Activated CD4-positive, alpha-beta T cell treated with anti-CD3 and anti-CD28 coated beads, Interleukin-2, amount 10 ng/mL, durations not matched to agents 7 days and 5 days (primary cell): ENCODE measurements at regions of chr15 and their contacts with region 1.

Region 1: GRCh38 chr15:78904599-78905358 is 32.1 kb downstream of the MORF4L1 start:
- DNase-seq: no peak
- H3K4me3 Mint-ChIP-seq: no peak overlapping the region
- H3K27ac Mint-ChIP-seq: no peak overlapping the region
- H3K4me1 Mint-ChIP-seq: peaks cover 10% of the 10 kb centered on the region
- H3K27me3 Mint-ChIP-seq: no peaks in the 10 kb centered on the region

Region 2: GRCh38 chr15:78993931-78994530 is 89.3 kb after region 1 on chr15:
- CTCF ChIA-PET with region 1: no interaction called
- POLR2A ChIA-PET with region 1: interaction called, 10 read pairs
- DNase-seq: no peak
- H3K4me3 Mint-ChIP-seq: no peak overlapping the region
- H3K27ac Mint-ChIP-seq: no peak overlapping the region
- H3K4me1 Mint-ChIP-seq: no peaks in the 10 kb centered on the region
- H3K27me3 Mint-ChIP-seq: no peaks in the 10 kb centered on the region